Activated CD8-positive, alpha-beta memory T cell treated with anti-CD3 and anti-CD28 coated beads, Interleukin-2, amount 10 ng/mL, durations not matched to agents 7 days and 5 days (primary cell): ENCODE measurements at regions of chr6 and their contacts with region 1.

Region 1: GRCh38 chr6:145633981-145634627 is 101.2 kb downstream of the EPM2A start:
- DNase-seq: peak; percentile 81
- ATAC-seq: peak; percentile 85
- H3K4me3 Mint-ChIP-seq: no peak overlapping the region
- H3K27ac Mint-ChIP-seq: no peak overlapping the region
- H3K4me1 Mint-ChIP-seq: no peaks in the 10 kb centered on the region
- H3K27me3 Mint-ChIP-seq: no peaks in the 10 kb centered on the region

Region 2: DNA sequence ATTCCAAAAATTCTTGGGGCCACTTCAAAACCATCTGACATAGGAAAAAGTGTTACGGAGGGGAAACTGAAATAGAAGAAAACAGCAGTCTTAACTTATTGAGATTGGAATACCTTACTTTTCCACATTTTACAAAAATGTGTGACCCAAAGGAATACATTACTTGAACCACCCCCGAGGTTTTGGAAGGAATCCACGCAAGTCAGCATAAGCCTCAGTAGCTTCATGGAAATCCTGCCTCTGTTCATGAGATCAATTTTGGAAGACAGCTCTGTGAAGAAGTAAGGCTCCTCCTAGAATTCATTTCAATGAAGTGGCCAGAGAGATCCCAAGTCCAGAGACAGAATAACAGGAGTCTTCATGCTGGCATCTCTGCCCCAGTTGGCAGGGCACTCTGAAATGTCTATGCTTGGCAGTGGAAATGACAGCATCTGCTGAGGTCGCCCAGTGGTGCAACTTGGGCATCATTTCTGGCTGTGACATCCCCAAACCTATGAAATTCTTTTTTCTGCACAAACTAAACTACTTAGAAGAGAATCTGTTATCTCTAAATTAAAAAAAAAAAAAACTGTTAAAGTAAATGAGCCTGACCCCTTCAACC is 31.3 kb before region 1 on chr6:
- CTCF ChIA-PET with region 1: no interaction called
- DNase-seq: no peak
- ATAC-seq: no peak
- H3K4me3 Mint-ChIP-seq: no peak overlapping the region
- H3K27ac Mint-ChIP-seq: no peak overlapping the region
- H3K4me1 Mint-ChIP-seq: no peaks in the 10 kb centered on the region
- H3K27me3 Mint-ChIP-seq: no peaks in the 10 kb centered on the region

Region 3: GRCh38 chr6:145623232-145623631 is 10.9 kb before region 1 on chr6:
- CTCF ChIA-PET with region 1: interaction called, 10 read pairs
- DNase-seq: no peak
- ATAC-seq: no peak
- H3K4me3 Mint-ChIP-seq: no peak overlapping the region
- H3K27ac Mint-ChIP-seq: no peak overlapping the region
- H3K4me1 Mint-ChIP-seq: peaks cover 5% of the 10 kb centered on the region
- H3K27me3 Mint-ChIP-seq: no peaks in the 10 kb centered on the region

Region 4: DNA sequence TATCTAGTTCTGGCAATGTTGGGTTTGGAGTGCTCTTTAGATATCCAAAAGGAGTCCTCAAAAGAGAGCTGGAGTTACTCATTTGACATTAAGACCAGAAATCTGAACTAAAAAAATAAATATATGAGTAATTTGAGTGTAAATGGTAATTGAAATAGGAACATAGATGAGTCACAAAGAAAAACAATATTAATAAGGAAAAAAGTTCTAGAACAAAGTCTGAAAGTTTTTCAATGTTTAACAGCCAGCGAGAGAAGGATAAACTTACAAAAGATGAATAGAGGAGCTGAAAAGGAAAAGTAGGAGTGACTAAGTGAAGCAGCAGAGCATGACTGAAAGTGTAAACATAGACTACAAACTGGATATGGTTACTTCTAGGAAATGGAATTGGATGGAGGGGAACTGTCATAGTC is 54.4 kb after region 1 on chr6:
- CTCF ChIA-PET with region 1: no interaction called
- DNase-seq: no peak
- ATAC-seq: no peak
- H3K4me3 Mint-ChIP-seq: no peak overlapping the region
- H3K27ac Mint-ChIP-seq: no peak overlapping the region
- H3K4me1 Mint-ChIP-seq: no peaks in the 10 kb centered on the region
- H3K27me3 Mint-ChIP-seq: no peaks in the 10 kb centered on the region